Activated CD8-positive, alpha-beta T cell treated with anti-CD3 and anti-CD28 coated beads, Interleukin-2, amount 10 ng/mL, durations not matched to agents 7 days and 5 days (primary cell): ENCODE measurements at regions of chr5 and their contacts with region 1.

Region 1: DNA sequence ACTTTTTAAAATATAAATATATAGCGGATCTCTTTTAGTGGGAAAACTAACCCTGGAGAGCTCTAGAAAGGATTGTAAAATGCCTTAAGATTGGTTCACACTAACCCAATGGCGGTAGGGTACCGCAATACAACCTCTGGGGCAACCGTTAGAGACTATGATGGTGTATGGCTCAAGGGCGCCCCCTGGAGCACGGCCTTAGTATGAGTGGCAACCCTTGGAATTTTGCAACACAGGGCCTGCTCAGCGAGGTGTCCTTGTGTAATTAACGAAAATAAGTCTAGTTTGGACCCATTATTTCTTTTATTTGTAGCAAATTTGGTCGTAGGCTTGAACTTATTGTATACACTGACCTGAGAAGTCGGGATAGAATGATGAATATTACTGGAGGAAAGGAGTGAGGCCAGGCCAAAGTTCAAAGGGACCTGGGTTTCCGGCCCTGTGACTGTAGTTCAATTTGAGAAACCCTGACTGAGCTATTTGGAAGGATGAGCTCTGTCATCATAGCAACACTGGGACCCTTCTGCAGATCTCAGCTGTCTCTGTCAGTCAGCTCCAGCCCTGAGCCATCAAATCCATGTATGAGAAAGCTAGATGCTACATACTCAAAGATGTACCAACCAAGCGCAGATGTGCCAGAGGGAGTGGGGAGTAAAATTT is 54.8 kb downstream of the CAMK4 start:
- DNase-seq: peak; percentile 90
- ATAC-seq: peak; percentile 97
- H3K4me3 Mint-ChIP-seq: no peak overlapping the region
- H3K27ac Mint-ChIP-seq: peak overlapping the region; percentile 70
- H3K4me1 Mint-ChIP-seq: peaks cover 34% of the 10 kb centered on the region
- H3K27me3 Mint-ChIP-seq: no peaks in the 10 kb centered on the region

Region 2: DNA sequence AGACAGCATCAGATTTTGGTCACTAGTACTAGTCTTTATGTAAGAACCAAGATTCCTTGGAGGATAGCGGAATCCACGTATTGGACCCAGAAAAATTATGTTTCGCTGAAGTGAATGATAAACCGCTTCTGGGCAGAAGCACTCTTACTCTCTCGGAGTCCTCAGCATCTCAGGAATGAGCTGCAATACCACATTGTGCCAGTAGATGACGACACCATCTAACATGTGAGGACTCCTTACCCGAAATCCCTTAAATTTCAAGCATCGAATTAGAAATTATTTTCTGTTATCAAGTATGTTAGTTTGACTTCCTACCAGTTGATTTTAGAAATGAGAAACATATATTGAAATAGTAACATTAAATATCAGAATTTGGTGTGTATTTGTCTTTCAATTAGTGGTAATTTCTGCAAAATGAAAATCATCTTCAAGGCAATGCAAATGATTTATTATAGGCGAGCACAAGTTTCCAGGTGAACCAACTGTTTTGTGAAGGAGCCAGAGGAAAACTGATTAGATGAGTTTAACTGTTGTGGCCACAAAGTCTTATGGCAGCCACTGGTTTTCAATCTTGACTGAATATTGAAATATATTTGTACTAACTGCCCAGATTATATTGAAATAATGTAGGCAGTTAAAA is 120.8 kb before region 1 on chr5:
- CTCF ChIA-PET with region 1: interaction called, 137 read pairs
- POLR2A ChIA-PET with region 1: no interaction called
- DNase-seq: peak; percentile 86
- ATAC-seq: peak; percentile 72
- H3K4me3 Mint-ChIP-seq: no peak overlapping the region
- H3K27ac Mint-ChIP-seq: no peak overlapping the region
- H3K4me1 Mint-ChIP-seq: peaks cover 2% of the 10 kb centered on the region
- H3K27me3 Mint-ChIP-seq: no peaks in the 10 kb centered on the region

Region 3: GRCh38 chr5:111223889-111224563 is 54.9 kb before region 1 on chr5 and contains the start of gene CAMK4:
- CTCF ChIA-PET with region 1: interaction called, 64 read pairs
- POLR2A ChIA-PET with region 1: interaction called, 4 read pairs
- DNase-seq: peak; percentile 86
- ATAC-seq: peak; percentile 88
- H3K4me3 Mint-ChIP-seq: peak within 1 kb of the TSS; percentile 98
- H3K27ac Mint-ChIP-seq: peak within 1 kb of the TSS; percentile 80
- H3K4me1 Mint-ChIP-seq: peaks cover 23% of the 10 kb centered on the region
- H3K27me3 Mint-ChIP-seq: no peaks in the 10 kb centered on the region
- total RNA-seq, gene CAMK4: 82.7 to 84.9 TPM

Region 4: DNA sequence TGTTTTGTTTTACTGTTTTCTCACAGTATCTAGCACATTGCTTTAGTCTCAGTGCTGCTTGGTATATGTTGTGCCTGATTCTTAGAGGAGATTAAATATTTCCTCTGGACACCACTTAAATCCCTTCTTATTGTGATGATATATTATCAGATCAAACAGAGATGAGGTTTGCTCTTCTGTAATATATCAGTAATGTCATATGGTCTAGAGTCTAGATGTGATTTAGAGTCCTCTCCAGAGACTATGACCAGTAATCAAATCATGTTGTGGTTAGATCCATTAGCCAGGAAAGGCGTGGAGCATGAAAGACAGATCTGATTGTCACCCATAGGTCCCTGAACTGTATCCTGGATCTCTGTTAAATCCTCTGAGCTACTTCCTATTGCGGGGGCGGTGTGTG is 30.4 kb before region 1 on chr5:
- CTCF ChIA-PET with region 1: interaction called, 29 read pairs
- POLR2A ChIA-PET with region 1: no interaction called
- DNase-seq: no peak
- ATAC-seq: no peak
- H3K4me3 Mint-ChIP-seq: no peak overlapping the region
- H3K27ac Mint-ChIP-seq: no peak overlapping the region
- H3K4me1 Mint-ChIP-seq: peaks cover 75% of the 10 kb centered on the region
- H3K27me3 Mint-ChIP-seq: no peaks in the 10 kb centered on the region

Region 5: GRCh38 chr5:111266491-111266890 is 12.5 kb before region 1 on chr5:
- CTCF ChIA-PET with region 1: interaction called, 23 read pairs
- POLR2A ChIA-PET with region 1: no interaction called
- DNase-seq: no peak
- ATAC-seq: no peak
- H3K4me3 Mint-ChIP-seq: no peak overlapping the region
- H3K27ac Mint-ChIP-seq: no peak overlapping the region
- H3K4me1 Mint-ChIP-seq: peaks cover 16% of the 10 kb centered on the region
- H3K27me3 Mint-ChIP-seq: no peaks in the 10 kb centered on the region

Region 6: GRCh38 chr5:111337688-111338087 is 58.7 kb after region 1 on chr5:
- CTCF ChIA-PET with region 1: no interaction called
- POLR2A ChIA-PET with region 1: no interaction called
- DNase-seq: no peak
- ATAC-seq: peak; percentile 57
- H3K4me3 Mint-ChIP-seq: no peak overlapping the region
- H3K27ac Mint-ChIP-seq: no peak overlapping the region
- H3K4me1 Mint-ChIP-seq: peaks cover 24% of the 10 kb centered on the region
- H3K27me3 Mint-ChIP-seq: no peaks in the 10 kb centered on the region

Region 7: DNA sequence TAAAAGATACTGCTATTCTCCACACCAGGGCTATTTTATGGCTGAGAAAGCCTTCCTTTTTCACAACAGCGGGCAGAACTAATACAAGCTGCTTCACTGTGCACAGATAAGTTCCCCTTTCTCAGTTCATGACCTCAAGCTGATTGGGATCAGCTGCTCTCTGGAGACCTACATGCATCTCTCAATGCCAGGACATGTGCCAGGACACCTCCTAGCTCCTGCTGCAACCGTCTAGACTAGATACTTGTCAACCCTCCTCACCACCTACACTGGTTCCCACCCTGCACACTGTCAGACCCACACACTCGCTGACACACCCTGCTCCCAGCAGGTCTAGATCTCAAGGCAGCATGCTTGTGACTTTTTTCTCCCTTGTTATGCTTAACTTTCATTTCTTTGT is 193.6 kb after region 1 on chr5:
- CTCF ChIA-PET with region 1: no interaction called
- POLR2A ChIA-PET with region 1: no interaction called
- DNase-seq: no peak
- ATAC-seq: no peak
- H3K4me3 Mint-ChIP-seq: no peak overlapping the region
- H3K27ac Mint-ChIP-seq: peak overlapping the region; percentile 45
- H3K4me1 Mint-ChIP-seq: peaks cover 2% of the 10 kb centered on the region
- H3K27me3 Mint-ChIP-seq: no peaks in the 10 kb centered on the region

Region 8: GRCh38 chr5:111507276-111507675 is 228.3 kb after region 1 on chr5:
- CTCF ChIA-PET with region 1: interaction called, 10 read pairs
- POLR2A ChIA-PET with region 1: no interaction called
- DNase-seq: no peak
- ATAC-seq: no peak
- H3K4me3 Mint-ChIP-seq: no peak overlapping the region
- H3K27ac Mint-ChIP-seq: no peak overlapping the region
- H3K4me1 Mint-ChIP-seq: peaks cover 53% of the 10 kb centered on the region
- H3K27me3 Mint-ChIP-seq: no peaks in the 10 kb centered on the region